ENCODE measurements at regions of chr20 and their contacts with region 1.

Region 1: DNA sequence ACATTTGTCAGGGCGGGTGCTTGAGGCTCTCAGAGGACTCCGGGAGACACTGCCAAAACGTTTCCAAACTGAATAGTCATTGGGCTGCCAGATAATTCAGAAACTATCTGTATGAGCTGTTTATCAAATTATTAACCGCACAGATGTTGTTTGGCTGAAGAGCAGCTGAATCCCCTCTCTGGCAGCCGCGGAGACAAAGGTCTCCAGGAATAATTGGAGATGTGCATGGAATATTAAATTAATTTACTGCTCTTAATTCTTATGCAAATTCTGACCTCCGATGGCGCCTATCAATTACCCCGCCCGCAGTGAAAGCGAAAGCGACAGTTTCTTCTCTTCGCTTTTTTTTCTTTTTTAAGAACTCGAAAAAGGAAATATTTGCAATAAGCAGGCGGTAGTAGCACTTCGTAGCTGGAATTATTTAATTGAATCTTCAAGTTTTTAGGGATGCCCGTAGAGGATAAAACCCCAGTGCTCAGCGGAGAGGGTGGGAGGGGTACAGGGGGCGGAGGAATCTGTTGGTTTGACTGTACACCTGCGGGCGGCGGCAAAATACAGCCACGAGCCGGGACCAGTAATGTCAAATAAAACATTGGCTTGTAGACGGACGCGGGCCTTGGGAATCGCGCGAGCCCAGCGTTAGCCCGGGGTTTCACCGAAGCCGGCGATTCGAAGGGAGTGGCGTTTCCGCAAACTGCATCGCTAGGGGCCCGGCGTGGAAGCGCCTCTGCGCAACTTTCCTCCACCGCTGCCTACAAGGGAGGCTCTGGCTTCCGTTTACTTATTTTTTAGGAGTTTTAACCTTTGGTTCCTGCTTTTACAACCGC is 6.2 kb downstream of the LINC00237 start:
- DNase-seq: peak; percentile 67
- ATAC-seq: peak; percentile 46
- H3K4me3 Mint-ChIP-seq: peak overlapping the region; percentile 80
- H3K27ac Mint-ChIP-seq: peak overlapping the region; percentile 91
- H3K4me1 Mint-ChIP-seq: peaks cover 32% of the 10 kb centered on the region
- H3K27me3 Mint-ChIP-seq: peaks cover 72% of the 10 kb centered on the region
- CTCF ChIP-seq: no peak

Region 2: GRCh38 chr20:21074605-21075336 is 25.2 kb before region 1 on chr20:
- CTCF ChIA-PET with region 1: no interaction called
- POLR2A ChIA-PET with region 1: no interaction called
- intact Hi-C with region 1: no loop called
- DNase-seq: peak; percentile 19
- ATAC-seq: peak; percentile 37
- H3K4me3 Mint-ChIP-seq: no peak overlapping the region
- H3K27ac Mint-ChIP-seq: no peak overlapping the region
- H3K4me1 Mint-ChIP-seq: no peaks in the 10 kb centered on the region
- H3K27me3 Mint-ChIP-seq: peaks cover 23% of the 10 kb centered on the region
- CTCF ChIP-seq: no peak

Region 3: GRCh38 chr20:22575087-22575721 is 1475.2 kb after region 1 on chr20:
- CTCF ChIA-PET with region 1: no interaction called
- POLR2A ChIA-PET with region 1: no interaction called
- intact Hi-C with region 1: loop called (anchors 10 kb)
- DNase-seq: no peak
- ATAC-seq: no peak
- H3K4me3 Mint-ChIP-seq: no peak overlapping the region
- H3K27ac Mint-ChIP-seq: no peak overlapping the region
- H3K4me1 Mint-ChIP-seq: peaks cover 2% of the 10 kb centered on the region
- H3K27me3 Mint-ChIP-seq: peaks cover 75% of the 10 kb centered on the region
- CTCF ChIP-seq: no peak